Dorsolateral prefrontal cortex (tissue), 120 donors: ENCODE measurements at regions of chr6 and their contacts with region 1.

Region 1: DNA sequence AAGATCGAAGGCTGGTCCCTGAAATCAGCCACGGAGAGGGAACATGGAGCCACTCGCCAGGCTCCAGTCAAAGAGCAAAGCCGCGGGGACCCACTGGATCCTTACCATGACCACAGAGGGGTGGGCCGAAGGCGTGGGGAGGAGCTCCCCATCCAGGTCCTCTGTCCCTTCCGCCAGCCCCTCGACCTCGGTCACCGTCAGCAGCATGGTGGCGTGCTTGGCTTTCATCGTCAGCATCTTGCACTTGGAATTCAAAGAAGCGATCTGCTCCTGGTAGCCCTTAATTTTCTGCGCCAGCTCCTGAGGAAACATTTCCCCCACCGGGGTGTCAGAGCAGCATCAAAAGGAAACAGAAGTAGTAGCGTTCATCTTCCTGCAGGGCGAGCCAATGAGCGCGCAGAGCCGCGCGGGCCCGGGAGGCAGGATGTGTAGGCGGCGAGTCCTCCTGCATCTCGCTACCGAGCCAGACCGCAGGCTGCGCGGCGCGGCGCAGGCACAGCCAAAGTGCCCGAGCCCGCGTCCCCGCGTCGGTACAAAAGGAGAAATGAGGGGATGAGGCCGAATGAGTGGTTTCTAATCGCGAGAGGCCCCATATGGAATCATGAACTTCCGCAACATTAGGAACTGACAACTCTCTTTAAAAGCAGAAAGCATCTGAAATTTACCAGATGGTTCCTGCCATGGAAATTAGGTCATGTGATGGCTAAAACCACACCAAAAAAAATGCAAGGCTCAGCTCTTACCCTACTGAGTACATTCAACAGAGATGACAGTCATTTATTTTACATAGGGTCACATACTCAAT is 335.2 kb downstream of the SYNE1 start:
- DNase-seq: peak; percentile 84 to 94 (median 92)
- H3K4me3 ChIP-seq: peak overlapping the region; percentile 57 to 90 (median 76)
- H3K27ac ChIP-seq: peak overlapping the region; percentile 69 to 98 (median 93)
- H3K27me3 ChIP-seq: no peaks in the 10 kb centered on the region
- CTCF ChIP-seq: peak; percentile 18 to 75 (median 60)

Region 2: GRCh38 chr6:152232501-152233151 is 69.3 kb before region 1 on chr6:
- intact Hi-C with region 1: no loop called
- DNase-seq: no peak
- H3K4me3 ChIP-seq: no peak overlapping the region
- H3K27ac ChIP-seq: peak overlapping the region in 12 of 59 donors; percentile 0 to 46 (median 18)
- H3K27me3 ChIP-seq: no peaks in the 10 kb centered on the region
- CTCF ChIP-seq: no peak

Region 3: GRCh38 chr6:152338335-152339125 is 36.6 kb after region 1 on chr6:
- intact Hi-C with region 1: loop called in 1 of 2 experiments (anchors 5 kb)
- DNase-seq: peak in 8 of 10 donors; percentile 15 to 72 (median 58)
- H3K4me3 ChIP-seq: no peak overlapping the region
- H3K27ac ChIP-seq: no peak overlapping the region
- H3K27me3 ChIP-seq: no peaks in the 10 kb centered on the region
- CTCF ChIP-seq: peak; percentile 69 to 94 (median 89)